ENCODE measurements at regions of chr12 and their contacts with region 1.

Region 1: GRCh38 chr12:10364815-10365622 is 24.8 kb downstream of the KLRK1 start:
- DNase-seq: peak; percentile 83
- ATAC-seq: peak; percentile 62
- H3K4me3 Mint-ChIP-seq: no peak overlapping the region
- H3K27ac Mint-ChIP-seq: no peak overlapping the region
- H3K4me1 Mint-ChIP-seq: peaks cover 41% of the 10 kb centered on the region
- H3K27me3 Mint-ChIP-seq: no peaks in the 10 kb centered on the region
- CTCF ChIP-seq: no peak

Region 2: GRCh38 chr12:10320643-10321042 is 44.4 kb before region 1 on chr12:
- CTCF ChIA-PET with region 1: interaction called, 14 read pairs
- POLR2A ChIA-PET with region 1: interaction called, 4 read pairs
- intact Hi-C with region 1: loop called (anchors 5 kb)
- DNase-seq: peak; percentile 34
- ATAC-seq: peak; percentile 90
- H3K4me3 Mint-ChIP-seq: no peak overlapping the region
- H3K27ac Mint-ChIP-seq: peak overlapping the region; percentile 85
- H3K4me1 Mint-ChIP-seq: peaks cover 47% of the 10 kb centered on the region
- H3K27me3 Mint-ChIP-seq: no peaks in the 10 kb centered on the region
- CTCF ChIP-seq: no peak

Region 3: GRCh38 chr12:10331642-10332239 is 33.3 kb before region 1 on chr12:
- CTCF ChIA-PET with region 1: interaction called, 3 read pairs
- POLR2A ChIA-PET with region 1: no interaction called
- intact Hi-C with region 1: loop called (anchors 5 kb)
- DNase-seq: no peak
- ATAC-seq: peak; percentile 82
- H3K4me3 Mint-ChIP-seq: no peak overlapping the region
- H3K27ac Mint-ChIP-seq: no peak overlapping the region
- H3K4me1 Mint-ChIP-seq: peaks cover 18% of the 10 kb centered on the region
- H3K27me3 Mint-ChIP-seq: no peaks in the 10 kb centered on the region
- CTCF ChIP-seq: peak; percentile 79

Region 4: DNA sequence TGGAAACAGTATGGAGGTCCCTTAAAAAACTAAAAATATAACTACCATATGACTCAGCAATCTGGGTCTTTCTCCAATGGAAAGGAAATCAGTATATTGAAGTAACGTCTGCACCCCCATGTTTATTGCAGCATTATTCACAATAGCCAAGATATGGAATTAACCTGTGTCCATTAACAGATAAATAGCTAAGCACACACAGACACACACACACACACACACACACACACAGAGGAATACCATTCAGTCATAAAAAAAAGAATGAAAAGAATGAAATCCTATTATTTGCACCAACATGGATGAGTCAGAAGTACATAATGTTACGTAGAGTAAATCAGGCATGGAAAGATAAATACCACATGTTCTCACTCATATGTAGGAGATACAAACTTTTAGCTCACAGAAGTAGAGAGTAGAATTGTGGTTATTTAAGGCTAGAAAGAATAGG is 20.2 kb after region 1 on chr12:
- CTCF ChIA-PET with region 1: interaction called, 20 read pairs
- POLR2A ChIA-PET with region 1: interaction called, 11 read pairs
- intact Hi-C with region 1: loop called (anchors 2 kb)
- DNase-seq: no peak
- ATAC-seq: peak; percentile 68
- H3K4me3 Mint-ChIP-seq: peak overlapping the region; percentile 90
- H3K27ac Mint-ChIP-seq: peak overlapping the region; percentile 92
- H3K4me1 Mint-ChIP-seq: peaks cover 47% of the 10 kb centered on the region
- H3K27me3 Mint-ChIP-seq: no peaks in the 10 kb centered on the region
- CTCF ChIP-seq: no peak

Region 5: DNA sequence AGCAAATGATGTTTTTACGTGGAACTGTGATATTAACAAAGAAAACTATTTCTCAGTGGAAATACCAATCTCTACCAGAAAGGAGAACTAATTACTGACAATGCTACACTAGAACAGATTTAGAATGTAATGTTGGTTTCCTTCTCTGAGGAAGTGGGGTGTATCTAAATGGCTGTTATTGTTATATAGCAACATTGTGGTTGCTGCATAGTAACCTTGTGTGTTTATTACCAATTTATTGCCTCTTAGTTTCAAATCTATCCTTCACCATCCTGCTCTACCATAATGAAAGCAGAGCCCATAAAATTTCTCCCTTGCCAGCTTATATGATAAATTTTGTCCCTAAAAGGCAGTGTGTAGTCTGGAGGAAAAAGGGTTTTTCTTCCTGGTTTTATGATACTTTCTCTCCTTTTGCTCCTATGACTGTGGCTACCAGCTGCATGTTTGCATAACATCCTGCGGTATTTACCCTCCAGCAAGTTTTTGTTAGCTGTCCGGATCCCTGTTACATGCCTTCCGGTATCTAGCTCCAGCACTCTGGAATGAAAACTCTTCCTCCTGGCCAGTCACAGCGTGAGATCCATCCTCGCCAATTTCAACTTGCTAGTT is 30.5 kb after region 1 on chr12:
- CTCF ChIA-PET with region 1: interaction called, 20 read pairs
- POLR2A ChIA-PET with region 1: interaction called, 15 read pairs
- intact Hi-C with region 1: loop called (anchors 2 kb)
- DNase-seq: no peak
- ATAC-seq: peak; percentile 45
- H3K4me3 Mint-ChIP-seq: peak overlapping the region; percentile 63
- H3K27ac Mint-ChIP-seq: peak overlapping the region; percentile 97
- H3K4me1 Mint-ChIP-seq: peaks cover 64% of the 10 kb centered on the region
- H3K27me3 Mint-ChIP-seq: no peaks in the 10 kb centered on the region
- CTCF ChIP-seq: no peak

Region 6: DNA sequence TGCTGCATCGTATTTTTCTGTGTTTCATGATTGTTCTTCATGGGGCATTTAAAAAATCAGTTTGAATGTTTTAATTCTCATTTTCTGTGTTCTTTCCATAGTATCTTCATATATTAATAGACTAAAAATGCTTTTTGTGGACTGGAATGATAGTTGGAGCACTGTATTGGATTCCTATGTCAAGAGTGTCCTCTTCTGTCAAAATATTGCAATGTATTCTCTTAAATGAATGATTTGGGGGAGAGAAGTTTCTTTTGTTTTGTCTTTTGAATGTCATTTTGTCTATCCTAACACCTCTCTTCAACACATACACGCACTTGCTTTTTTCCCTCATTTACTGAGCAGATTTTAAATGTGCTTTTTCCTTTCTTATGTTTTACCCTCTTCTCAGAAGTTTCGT is 136.0 kb after region 1 on chr12:
- CTCF ChIA-PET with region 1: interaction called, 9 read pairs
- POLR2A ChIA-PET with region 1: interaction called, 3 read pairs
- intact Hi-C with region 1: loop called (anchors 10 kb)
- DNase-seq: no peak
- ATAC-seq: no peak
- H3K4me3 Mint-ChIP-seq: peak overlapping the region; percentile 47
- H3K27ac Mint-ChIP-seq: peak overlapping the region; percentile 78
- H3K4me1 Mint-ChIP-seq: peaks cover 65% of the 10 kb centered on the region
- H3K27me3 Mint-ChIP-seq: no peaks in the 10 kb centered on the region
- CTCF ChIP-seq: peak; percentile 38

Measured in activated CD8-positive, alpha-beta T cell treated with anti-CD3 and anti-CD28 coated beads for 36 hours (primary cell).